ENCODE measurements at regions of chr2 and their contacts with region 1.

Region 1: DNA sequence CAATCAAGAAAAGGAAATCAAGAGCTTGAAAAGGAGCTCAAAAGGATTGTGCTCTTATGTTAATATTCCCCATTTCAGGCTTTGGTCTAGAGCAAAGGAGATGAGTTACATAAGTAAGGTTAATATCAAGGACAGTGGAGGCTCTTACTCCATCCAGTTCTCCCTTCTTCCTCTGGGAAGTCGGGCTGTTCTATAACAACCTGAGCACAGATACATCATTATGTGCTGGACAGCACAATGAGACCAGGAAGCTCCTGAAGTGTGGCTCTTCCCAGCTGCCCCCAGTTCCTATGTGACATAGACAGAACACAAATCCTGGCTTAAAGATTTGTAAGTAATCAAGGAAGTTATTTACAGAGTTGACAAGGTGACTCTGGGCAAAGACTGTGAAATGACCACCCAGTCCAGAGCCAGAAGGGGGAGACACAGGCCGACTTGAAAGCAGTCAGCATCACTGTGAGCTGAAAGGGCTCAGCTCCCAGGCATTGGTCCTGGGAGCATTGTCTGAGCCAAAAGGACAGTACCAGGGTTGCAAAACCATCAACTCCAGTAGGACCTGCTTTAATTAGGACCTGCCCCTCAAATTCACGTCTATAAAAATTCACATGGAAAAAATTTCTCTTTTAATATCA is 917.6 kb upstream of the ACVR2A start:
- DNase-seq: peak; percentile 59 to 66
- H3K4me3 ChIP-seq: no peak overlapping the region
- H3K4me3 Mint-ChIP-seq: no peak overlapping the region
- H3K27ac Mint-ChIP-seq: no peak overlapping the region
- H3K4me1 ChIP-seq: no peaks in the 10 kb centered on the region
- H3K4me1 Mint-ChIP-seq: no peaks in the 10 kb centered on the region
- H3K27me3 ChIP-seq: no peaks in the 10 kb centered on the region
- H3K27me3 Mint-ChIP-seq: no peaks in the 10 kb centered on the region
- CTCF ChIP-seq: peak; percentile 67 to 72

Region 2: GRCh38 chr2:146734042-146734820 is 193.0 kb before region 1 on chr2:
- CTCF ChIA-PET with region 1: no interaction called
- POLR2A ChIA-PET with region 1: no interaction called
- intact Hi-C with region 1: loop called (anchors 10 kb)
- DNase-seq: peak in 1 of 2 experiments; percentile 47
- H3K4me3 ChIP-seq: no peak overlapping the region
- H3K4me3 Mint-ChIP-seq: no peak overlapping the region
- H3K27ac Mint-ChIP-seq: no peak overlapping the region
- H3K4me1 ChIP-seq: no peaks in the 10 kb centered on the region
- H3K4me1 Mint-ChIP-seq: no peaks in the 10 kb centered on the region
- H3K27me3 ChIP-seq: no peaks in the 10 kb centered on the region
- H3K27me3 Mint-ChIP-seq: peaks cover 2% of the 10 kb centered on the region
- CTCF ChIP-seq: peak; percentile 32 to 44

Region 3: DNA sequence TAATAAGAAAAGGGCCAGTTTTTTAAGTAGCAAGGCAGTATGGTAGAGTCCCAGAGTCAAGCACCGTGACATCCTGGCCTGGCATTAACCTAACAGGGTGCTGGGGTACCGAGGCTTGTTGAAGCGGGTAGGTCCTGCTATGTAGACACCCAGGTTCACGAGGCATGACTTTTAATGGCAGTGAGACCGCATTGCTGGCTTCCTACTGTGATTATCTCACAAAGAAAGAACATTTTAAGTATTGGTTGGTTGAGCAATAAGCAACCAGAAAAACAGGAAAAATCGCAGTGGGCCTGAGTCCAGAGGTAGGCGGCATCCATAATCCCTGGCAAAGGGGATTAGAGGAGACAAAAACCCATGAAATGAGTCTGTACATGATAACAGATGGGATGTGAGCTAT is 10.3 kb before region 1 on chr2:
- CTCF ChIA-PET with region 1: no interaction called
- POLR2A ChIA-PET with region 1: no interaction called
- intact Hi-C with region 1: no loop called
- DNase-seq: no peak
- H3K4me3 ChIP-seq: no peak overlapping the region
- H3K4me3 Mint-ChIP-seq: no peak overlapping the region
- H3K27ac Mint-ChIP-seq: no peak overlapping the region
- H3K4me1 ChIP-seq: no peaks in the 10 kb centered on the region
- H3K4me1 Mint-ChIP-seq: no peaks in the 10 kb centered on the region
- H3K27me3 ChIP-seq: no peaks in the 10 kb centered on the region
- H3K27me3 Mint-ChIP-seq: no peaks in the 10 kb centered on the region
- CTCF ChIP-seq: no peak

Region 4: GRCh38 chr2:147331790-147332419 is 404.7 kb after region 1 on chr2:
- CTCF ChIA-PET with region 1: no interaction called
- POLR2A ChIA-PET with region 1: no interaction called
- intact Hi-C with region 1: loop called (anchors 1 kb)
- DNase-seq: peak in 1 of 2 experiments; percentile 44
- H3K4me3 ChIP-seq: no peak overlapping the region
- H3K4me3 Mint-ChIP-seq: no peak overlapping the region
- H3K27ac Mint-ChIP-seq: no peak overlapping the region
- H3K4me1 ChIP-seq: no peaks in the 10 kb centered on the region; the same call in 1 of the 2 replicates
- H3K4me1 Mint-ChIP-seq: no peaks in the 10 kb centered on the region
- H3K27me3 ChIP-seq: no peaks in the 10 kb centered on the region
- H3K27me3 Mint-ChIP-seq: no peaks in the 10 kb centered on the region
- CTCF ChIP-seq: peak; percentile 47 to 51

Measured in Caco-2 (cell line).